ENCODE measurements at regions of chr10 and their contacts with region 1.

Region 1: DNA sequence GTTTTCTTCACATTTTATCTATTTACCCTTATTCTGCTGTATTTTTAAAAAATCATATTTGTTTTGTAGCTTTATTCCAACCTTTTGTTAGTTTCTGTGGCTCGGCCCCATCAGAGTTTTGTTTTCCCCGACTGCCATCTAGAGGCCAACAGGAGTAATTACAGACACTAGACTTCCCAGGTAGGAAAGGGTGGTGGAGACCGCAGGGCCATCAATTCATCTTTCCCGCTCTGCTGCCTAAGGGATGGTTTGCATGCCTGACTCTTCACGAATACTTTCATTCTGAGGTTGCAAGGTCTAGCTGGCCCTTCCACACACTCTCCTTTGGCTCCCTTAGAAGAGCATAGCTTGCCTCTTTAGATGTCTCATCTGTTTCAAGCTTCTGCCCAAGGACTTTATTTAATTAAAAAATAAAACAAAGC is 38.3 kb downstream of the LYZL2 start:
- H3K4me3 ChIP-seq: no peak overlapping the region
- H3K27ac ChIP-seq: no peak overlapping the region
- H3K4me1 ChIP-seq: no peaks in the 10 kb centered on the region
- CTCF ChIP-seq: 0 out of 2 replicates have a peak, but pooled peaks have one; percentile 17

Region 2: DNA sequence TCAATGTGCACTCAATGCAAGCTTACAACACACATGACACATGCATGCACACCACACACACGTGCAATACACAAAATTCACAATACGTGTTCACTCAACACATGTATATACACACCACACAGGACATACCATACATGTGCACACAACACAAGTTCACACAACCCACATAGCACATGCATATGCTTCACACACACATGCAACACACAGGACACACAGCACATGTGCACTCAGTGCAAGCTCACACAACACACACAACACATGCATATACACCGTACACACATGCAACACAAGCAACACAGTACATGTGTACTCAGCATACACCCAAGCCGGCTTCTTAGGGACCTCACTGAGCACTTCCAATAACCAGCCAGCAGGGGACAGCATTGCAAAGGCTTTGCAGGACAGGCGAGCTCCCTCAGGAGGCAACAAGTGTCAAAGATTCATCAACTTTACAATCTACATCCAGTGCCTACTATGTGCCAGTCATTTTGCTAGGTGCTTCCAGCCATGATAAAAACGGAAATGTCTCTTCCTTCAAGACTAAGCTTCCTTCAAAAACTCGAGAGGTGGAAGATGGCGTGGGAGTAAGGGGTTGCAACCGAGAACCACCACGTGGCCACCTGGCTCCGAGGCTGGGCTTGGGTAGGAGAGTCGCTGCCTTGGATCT is 593.0 kb before region 1 on chr10:
- CTCF ChIA-PET with region 1: interaction called, 21 read pairs
- POLR2A ChIA-PET with region 1: no interaction called
- H3K4me3 ChIP-seq: no peak overlapping the region
- H3K27ac ChIP-seq: no peak overlapping the region
- H3K4me1 ChIP-seq: peaks cover 2% of the 10 kb centered on the region; the same call in 1 of the 2 replicates
- CTCF ChIP-seq: peak; percentile 97

Region 3: GRCh38 chr10:30384701-30385201 is 206.5 kb before region 1 on chr10:
- CTCF ChIA-PET with region 1: interaction called, 111 read pairs
- POLR2A ChIA-PET with region 1: no interaction called
- H3K4me3 ChIP-seq: no peak overlapping the region
- H3K27ac ChIP-seq: no peak overlapping the region
- H3K4me1 ChIP-seq: no peaks in the 10 kb centered on the region
- CTCF ChIP-seq: no peak

Region 4: DNA sequence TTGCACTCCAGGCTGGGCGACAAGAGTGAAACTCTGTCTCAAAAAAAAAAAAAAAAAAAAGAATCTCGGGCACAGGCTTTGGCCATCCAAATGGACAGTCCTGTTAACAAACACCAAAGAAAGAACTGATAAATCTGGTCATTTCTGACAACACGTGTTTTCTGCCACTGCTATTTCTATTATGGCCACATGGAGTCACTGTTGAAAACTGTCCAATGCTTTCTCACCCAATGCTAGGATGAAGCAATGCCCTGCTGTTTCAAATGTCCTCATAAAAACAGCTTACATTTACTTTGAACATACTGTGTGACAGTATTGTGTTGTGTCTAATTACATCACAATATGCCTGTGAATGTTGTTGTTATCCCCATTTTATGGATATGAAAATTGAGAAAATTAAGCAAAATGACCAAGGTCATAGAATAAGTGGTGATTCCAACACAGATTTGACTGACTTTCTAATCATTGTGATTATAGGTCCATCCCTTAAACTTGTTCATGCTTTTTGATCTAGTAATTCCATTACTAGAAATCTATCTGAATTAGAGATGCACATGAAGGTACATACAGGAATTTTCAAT is 177.2 kb before region 1 on chr10:
- CTCF ChIA-PET with region 1: interaction called, 21 read pairs
- POLR2A ChIA-PET with region 1: no interaction called
- H3K4me3 ChIP-seq: no peak overlapping the region
- H3K27ac ChIP-seq: no peak overlapping the region
- H3K4me1 ChIP-seq: no peaks in the 10 kb centered on the region
- CTCF ChIP-seq: peak; percentile 36; the same call in 1 of the 2 replicates

Region 5: DNA sequence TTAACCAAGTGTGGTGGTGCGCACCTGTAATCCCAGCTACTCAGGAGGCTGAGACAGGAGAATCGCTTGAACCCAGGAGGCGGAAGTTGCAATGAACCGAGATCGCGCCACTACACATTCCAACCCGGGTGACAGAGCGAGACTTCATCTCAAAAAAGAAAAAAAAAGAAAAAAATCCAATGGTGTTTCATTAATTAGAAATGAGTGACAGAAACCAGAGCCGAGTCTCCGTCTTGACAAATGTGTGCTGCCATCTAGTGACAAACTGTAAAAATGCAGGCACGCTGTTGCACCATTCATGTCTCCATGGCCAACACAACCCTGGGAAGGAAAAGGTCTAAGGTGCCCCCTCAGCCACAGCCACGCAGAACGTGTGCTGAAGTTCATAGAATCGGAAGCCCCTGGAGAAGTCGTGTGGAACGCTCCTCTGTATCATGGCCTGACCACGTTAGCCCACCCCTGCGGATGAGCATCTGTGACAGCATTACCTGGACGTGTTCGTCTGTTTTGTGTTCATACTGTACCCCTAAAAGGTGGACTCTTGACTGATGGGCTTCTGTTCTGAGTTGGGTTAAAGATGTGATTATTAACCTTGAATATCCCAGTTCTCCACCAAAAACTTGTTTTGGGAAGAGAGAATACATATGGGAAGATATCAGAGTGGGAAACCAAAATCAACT is 56.7 kb before region 1 on chr10:
- CTCF ChIA-PET with region 1: interaction called, 22 read pairs
- POLR2A ChIA-PET with region 1: no interaction called
- H3K4me3 ChIP-seq: no peak overlapping the region
- H3K27ac ChIP-seq: no peak overlapping the region
- H3K4me1 ChIP-seq: no peaks in the 10 kb centered on the region
- CTCF ChIP-seq: peak; percentile 52; the same call in 1 of the 2 replicates